Naive thymus-derived CD4-positive, alpha-beta T cell (primary cell): ENCODE measurements at regions of chr10 and their contacts with region 1.

Region 1: GRCh38 chr10:27099916-27100812 is at the start of gene ANKRD26:
- DNase-seq: peak; percentile 92 to 97 (median 95)
- ATAC-seq: peak; percentile 76
- H3K4me3 ChIP-seq: peak within 1 kb of the TSS; percentile 89
- H3K4me3 Mint-ChIP-seq: peak within 1 kb of the TSS; percentile 86 to 97 (median 92)
- H3K27ac ChIP-seq: peak within 1 kb of the TSS; percentile 84
- H3K27ac Mint-ChIP-seq: peak within 1 kb of the TSS; percentile 92 to 99 (median 98)
- H3K4me1 ChIP-seq: peaks cover 18 to 28% of the 10 kb centered on the region in 2 donors
- H3K4me1 Mint-ChIP-seq: peaks cover 30 to 64% (median 51%) of the 10 kb centered on the region in 7 donors
- H3K27me3 ChIP-seq: no peaks in the 10 kb centered on the region
- H3K27me3 Mint-ChIP-seq: peaks cover 0 to 2% (median 0%) of the 10 kb centered on the region in 5 donors
- total RNA-seq, gene ANKRD26: 6.4 to 14.2 (median 8.9) TPM

Region 2: DNA sequence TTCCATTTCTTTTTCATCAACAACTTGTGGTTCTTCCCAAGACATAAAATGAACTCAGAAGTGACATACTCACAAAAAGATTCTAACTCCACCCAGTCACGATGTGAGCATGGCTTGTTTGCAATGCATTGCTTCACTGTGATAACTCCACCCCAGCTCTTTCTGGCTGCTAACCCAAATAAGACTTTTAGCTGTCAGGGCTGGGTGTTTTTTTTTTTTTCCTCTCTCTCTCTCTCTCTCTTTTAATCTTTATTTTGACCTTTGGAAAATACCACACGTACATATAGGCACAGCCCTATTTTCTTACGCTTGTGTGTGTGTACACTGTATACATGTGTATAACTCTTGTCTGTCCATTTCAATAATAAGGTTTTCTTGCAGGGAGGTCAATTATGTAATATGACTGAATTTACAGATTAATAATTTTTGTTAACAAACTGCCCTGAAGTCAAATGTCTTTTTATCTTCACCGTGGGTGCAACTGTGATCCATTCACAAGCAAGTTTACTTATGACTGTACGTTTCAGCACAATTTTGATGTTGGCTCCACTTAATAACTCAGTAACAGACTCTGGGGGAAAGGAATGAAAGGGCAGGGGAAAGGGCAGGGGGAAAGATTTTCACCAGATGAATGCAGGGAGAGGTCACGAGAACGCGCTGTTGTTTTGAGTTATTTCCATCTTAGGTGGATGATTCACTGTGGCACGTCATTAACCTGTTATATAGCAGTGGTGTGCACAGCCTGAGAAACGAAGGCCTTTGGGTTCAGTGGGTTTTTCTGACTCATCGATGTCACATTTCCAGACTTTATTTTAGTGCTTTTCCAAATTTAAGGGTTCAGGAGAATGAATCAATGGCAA is 612.9 kb before region 1 on chr10:
- CTCF ChIA-PET with region 1: no interaction called
- POLR2A ChIA-PET with region 1: no interaction called
- intact Hi-C with region 1: loop called in 1 of 2 experiments (anchors 2 kb)
- DNase-seq: peak in 8 of 9 donors; percentile 50 to 86 (median 66)
- ATAC-seq: peak; percentile 85
- H3K4me3 ChIP-seq: peak overlapping the region; percentile 43
- H3K4me3 Mint-ChIP-seq: peak overlapping the region; percentile 8 to 83 (median 74)
- H3K27ac ChIP-seq: peak overlapping the region; percentile 84
- H3K27ac Mint-ChIP-seq: peak overlapping the region; percentile 90 to 97 (median 94)
- H3K4me1 ChIP-seq: peaks cover 56 to 64% of the 10 kb centered on the region in 2 donors
- H3K4me1 Mint-ChIP-seq: peaks cover 57 to 82% (median 74%) of the 10 kb centered on the region in 7 donors
- H3K27me3 ChIP-seq: no peaks in the 10 kb centered on the region
- H3K27me3 Mint-ChIP-seq: no peaks in the 10 kb centered on the region

Region 3: DNA sequence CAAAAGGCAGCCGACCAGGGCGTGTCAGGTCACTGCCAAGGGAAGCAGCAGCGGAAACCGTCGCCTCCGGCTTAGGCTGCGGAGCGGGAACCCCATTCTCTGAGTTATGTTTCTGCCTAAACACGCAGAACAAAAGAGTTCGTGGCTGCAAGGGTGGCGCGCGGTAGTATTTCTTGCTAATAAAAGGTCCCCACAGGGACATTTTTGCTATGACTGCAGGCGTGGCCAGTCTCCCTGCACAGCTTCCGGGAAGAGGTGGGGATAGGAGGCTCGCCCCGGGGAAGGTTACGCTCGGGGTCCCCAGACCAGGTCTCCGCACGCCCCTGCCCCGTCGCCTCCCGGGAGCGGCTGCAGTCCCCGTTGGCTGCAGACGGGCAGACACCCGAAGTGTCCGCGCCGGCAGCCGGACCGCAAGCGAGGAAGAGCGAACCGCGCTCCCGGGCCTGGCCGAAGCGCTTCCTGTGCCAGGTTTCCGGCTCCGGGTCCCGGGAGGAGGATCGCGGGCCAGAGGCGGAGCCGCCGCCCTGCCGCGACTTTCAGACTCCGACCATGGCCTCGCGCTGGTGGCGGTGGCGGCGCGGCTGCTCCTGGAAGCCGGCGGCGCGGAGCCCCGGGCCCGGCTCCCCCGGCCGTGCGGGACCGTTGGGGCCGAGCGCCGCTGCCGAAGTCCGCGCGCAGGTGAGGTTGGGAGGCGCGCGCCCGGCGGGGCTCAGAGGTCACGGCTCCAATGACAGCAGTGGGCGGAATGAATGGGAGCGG is 402.8 kb before region 1 on chr10 and contains the start of gene PDSS1:
- CTCF ChIA-PET with region 1: no interaction called
- POLR2A ChIA-PET with region 1: no interaction called
- intact Hi-C with region 1: loop called (anchors 1 to 2 kb)
- DNase-seq: peak; percentile 34 to 77 (median 60)
- ATAC-seq: peak; percentile 77
- H3K4me3 ChIP-seq: peak within 1 kb of the TSS; percentile 77
- H3K4me3 Mint-ChIP-seq: peak within 1 kb of the TSS; percentile 92 to 100 (median 98)
- H3K27ac ChIP-seq: peak within 1 kb of the TSS; percentile 85
- H3K27ac Mint-ChIP-seq: peak within 1 kb of the TSS; percentile 94 to 99 (median 97)
- H3K4me1 ChIP-seq: peaks cover 7 to 17% of the 10 kb centered on the region in 2 donors
- H3K4me1 Mint-ChIP-seq: peaks cover 28 to 47% (median 34%) of the 10 kb centered on the region in 7 donors
- H3K27me3 ChIP-seq: no peaks in the 10 kb centered on the region
- H3K27me3 Mint-ChIP-seq: no peaks in the 10 kb centered on the region
- total RNA-seq, gene PDSS1: 3.8 to 15.2 (median 4.7) TPM

Region 4: GRCh38 chr10:26737730-26738129 is 362.4 kb before region 1 on chr10:
- CTCF ChIA-PET with region 1: no interaction called
- POLR2A ChIA-PET with region 1: no interaction called
- intact Hi-C with region 1: loop called in 1 of 2 experiments (anchors 10 kb)
- DNase-seq: peak in 1 of 9 donors; percentile 51
- ATAC-seq: peak; percentile 84
- H3K4me3 ChIP-seq: no peak overlapping the region
- H3K4me3 Mint-ChIP-seq: peak overlapping the region in 1 of 10 donors; percentile 7
- H3K27ac ChIP-seq: no peak overlapping the region
- H3K27ac Mint-ChIP-seq: peak overlapping the region in 7 of 9 donors; percentile 46 to 89 (median 69)
- H3K4me1 ChIP-seq: no peaks in the 10 kb centered on the region
- H3K4me1 Mint-ChIP-seq: peaks cover 0 to 59% (median 0%) of the 10 kb centered on the region in 7 donors
- H3K27me3 ChIP-seq: no peaks in the 10 kb centered on the region
- H3K27me3 Mint-ChIP-seq: no peaks in the 10 kb centered on the region

Region 5: GRCh38 chr10:26890956-26891355 is 209.2 kb before region 1 on chr10:
- CTCF ChIA-PET with region 1: no interaction called
- POLR2A ChIA-PET with region 1: no interaction called
- intact Hi-C with region 1: loop called in 1 of 2 experiments (anchors 1 kb)
- DNase-seq: peak in 7 of 9 donors; percentile 10 to 45 (median 27)
- ATAC-seq: peak; percentile 51
- H3K4me3 ChIP-seq: no peak overlapping the region
- H3K4me3 Mint-ChIP-seq: no peak overlapping the region
- H3K27ac ChIP-seq: no peak overlapping the region
- H3K27ac Mint-ChIP-seq: peak overlapping the region in 1 of 9 donors; percentile 48
- H3K4me1 ChIP-seq: no peaks in the 10 kb centered on the region
- H3K4me1 Mint-ChIP-seq: no peaks in the 10 kb centered on the region
- H3K27me3 ChIP-seq: no peaks in the 10 kb centered on the region
- H3K27me3 Mint-ChIP-seq: peaks cover 0 to 9% (median 7%) of the 10 kb centered on the region in 5 donors

Region 6: DNA sequence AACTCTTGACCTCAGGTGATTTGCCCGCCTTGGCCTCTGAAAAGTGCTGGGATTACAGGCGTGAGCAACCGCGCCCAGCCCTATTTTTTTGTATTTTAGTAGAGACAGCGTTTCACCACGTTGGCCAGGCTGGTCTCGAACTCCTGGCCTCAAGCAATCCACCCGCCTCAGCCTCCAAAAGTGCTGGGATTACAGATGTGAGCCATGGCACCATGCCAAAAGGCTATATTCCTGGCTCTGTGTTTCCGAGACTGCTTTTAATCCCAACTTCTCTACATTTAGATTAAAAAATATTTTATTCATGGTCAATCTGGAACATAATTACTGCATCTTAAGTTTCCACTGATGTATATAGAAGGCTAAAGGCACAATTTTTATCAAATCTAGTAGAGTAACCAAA is 11.1 kb after region 1 on chr10:
- CTCF ChIA-PET with region 1: interaction called, 3 read pairs
- POLR2A ChIA-PET with region 1: interaction called, 10 read pairs
- intact Hi-C with region 1: loop called in 1 of 2 experiments (anchors 2 kb)
- DNase-seq: no peak
- ATAC-seq: no peak
- H3K4me3 ChIP-seq: no peak overlapping the region
- H3K4me3 Mint-ChIP-seq: no peak overlapping the region
- H3K27ac ChIP-seq: no peak overlapping the region
- H3K27ac Mint-ChIP-seq: no peak overlapping the region
- H3K4me1 ChIP-seq: no peaks in the 10 kb centered on the region
- H3K4me1 Mint-ChIP-seq: peaks cover 0 to 3% (median 0%) of the 10 kb centered on the region in 7 donors
- H3K27me3 ChIP-seq: no peaks in the 10 kb centered on the region
- H3K27me3 Mint-ChIP-seq: no peaks in the 10 kb centered on the region

Region 7: GRCh38 chr10:27360581-27361172 is 260.5 kb after region 1 on chr10:
- CTCF ChIA-PET with region 1: interaction called, 3 read pairs
- POLR2A ChIA-PET with region 1: no interaction called
- intact Hi-C with region 1: loop called in 1 of 2 experiments (anchors 1 kb)
- DNase-seq: peak; percentile 67 to 85 (median 81)
- ATAC-seq: peak; percentile 97
- H3K4me3 ChIP-seq: no peak overlapping the region
- H3K4me3 Mint-ChIP-seq: no peak overlapping the region
- H3K27ac ChIP-seq: no peak overlapping the region
- H3K27ac Mint-ChIP-seq: no peak overlapping the region
- H3K4me1 ChIP-seq: no peaks in the 10 kb centered on the region
- H3K4me1 Mint-ChIP-seq: no peaks in the 10 kb centered on the region
- H3K27me3 ChIP-seq: no peaks in the 10 kb centered on the region
- H3K27me3 Mint-ChIP-seq: no peaks in the 10 kb centered on the region